ENCODE measurements at regions of chr7 and their contacts with region 1.

Region 1: GRCh38 chr7:106285051-106285854 is 470 bp upstream of the NAMPT start:
- DNase-seq: peak; percentile 97 to 98
- ATAC-seq: peak; percentile 82 to 86
- H3K4me3 ChIP-seq: peak overlapping the region; percentile 73 to 85 (median 78)
- H3K27ac ChIP-seq: peak overlapping the region; percentile 87 to 98 (median 97)
- H3K4me1 ChIP-seq: peaks cover 18 to 24% of the 10 kb centered on the region in 2 donors
- H3K27me3 ChIP-seq: no peaks in the 10 kb centered on the region
- CTCF ChIP-seq: peak in 1 of 5 experiments; percentile 7
- POLR2A ChIP-seq: peak; percentile 61 to 78

Region 2: GRCh38 chr7:105522062-105522936 is 763.0 kb before region 1 on chr7 and contains the start of gene PUS7:
- in situ Hi-C with region 1: no loop called
- intact Hi-C with region 1: loop called (anchors 10 kb)
- DNase-seq: peak; percentile 72 to 83
- ATAC-seq: peak; percentile 93 to 95
- H3K4me3 ChIP-seq: peak within 1 kb of the TSS; percentile 56 to 87 (median 64)
- H3K27ac ChIP-seq: peak within 1 kb of the TSS; percentile 82 to 96 (median 86)
- H3K4me1 ChIP-seq: peaks cover 12 to 15% of the 10 kb centered on the region in 2 donors
- H3K27me3 ChIP-seq: no peaks in the 10 kb centered on the region
- CTCF ChIP-seq: peak in 2 of 5 experiments; percentile 16 to 26
- POLR2A ChIP-seq: peak; percentile 90 to 91
- total RNA-seq, gene PUS7: 13.4 to 66.2 (median 17.8) TPM

Region 3: GRCh38 chr7:106056513-106057203 is 228.6 kb before region 1 on chr7:
- in situ Hi-C with region 1: loop called in 1 of 4 experiments (anchors 25 kb)
- intact Hi-C with region 1: loop called (anchors 10 kb)
- DNase-seq: peak; percentile 62 to 71
- ATAC-seq: peak; percentile 92 to 98
- H3K4me3 ChIP-seq: no peak overlapping the region
- H3K27ac ChIP-seq: no peak overlapping the region
- H3K4me1 ChIP-seq: peaks cover 0 to 4% of the 10 kb centered on the region in 2 donors
- H3K27me3 ChIP-seq: no peaks in the 10 kb centered on the region
- CTCF ChIP-seq: peak; percentile 88 to 92 (median 90)
- POLR2A ChIP-seq: no peak

Region 4: DNA sequence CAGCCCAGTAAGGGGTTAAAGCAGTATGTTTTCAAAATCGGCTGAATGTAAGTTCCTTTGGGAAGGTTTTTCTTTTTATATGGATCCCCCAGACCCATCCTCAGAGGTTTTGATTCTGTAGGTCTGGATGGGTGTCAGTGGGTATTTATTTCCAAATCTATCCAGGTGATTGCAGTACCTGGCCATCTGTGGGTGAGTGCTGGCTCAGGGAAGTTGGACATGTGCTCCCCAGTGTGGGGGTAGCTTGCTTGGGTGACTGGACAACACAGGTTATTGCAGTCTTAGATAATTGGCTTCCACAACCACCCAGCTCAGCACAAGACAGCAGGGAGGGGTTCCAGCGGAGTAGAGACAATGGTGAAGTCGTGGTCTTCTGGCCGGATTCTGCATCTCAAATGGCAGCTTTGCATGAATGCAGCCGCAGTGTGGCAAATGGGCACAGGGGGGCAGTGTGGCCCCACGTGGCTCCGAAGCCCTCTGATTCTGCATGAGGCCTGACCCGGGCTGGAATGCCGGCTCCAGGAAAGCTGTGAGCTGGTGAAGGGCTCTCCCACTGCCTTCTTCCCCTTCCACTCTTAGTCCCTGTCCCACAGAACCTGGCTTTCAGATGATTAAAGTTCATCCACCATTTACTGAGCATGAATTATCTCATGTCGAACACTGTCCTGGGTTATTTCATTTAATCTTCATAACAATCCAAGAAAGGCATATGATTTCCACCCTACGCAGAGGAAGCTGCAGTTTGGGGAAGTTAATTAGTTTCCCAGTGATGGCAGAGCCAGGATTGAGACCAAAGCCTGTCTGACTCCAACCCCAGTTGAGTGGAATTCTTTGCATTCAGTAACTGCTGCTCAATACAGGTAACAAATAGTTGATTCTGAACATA is 108.6 kb before region 1 on chr7:
- in situ Hi-C with region 1: loop called in 3 of 4 experiments (anchors 10 to 25 kb)
- intact Hi-C with region 1: loop called (anchors 1 kb)
- DNase-seq: peak; percentile 63 to 75
- ATAC-seq: peak; percentile 68 to 82
- H3K4me3 ChIP-seq: no peak overlapping the region
- H3K27ac ChIP-seq: peak overlapping the region; percentile 69 to 73 (median 71)
- H3K4me1 ChIP-seq: peaks cover 18% of the 10 kb centered on the region in 2 donors
- H3K27me3 ChIP-seq: no peaks in the 10 kb centered on the region
- CTCF ChIP-seq: peak; percentile 90 to 98 (median 97)
- POLR2A ChIP-seq: no peak

Region 5: DNA sequence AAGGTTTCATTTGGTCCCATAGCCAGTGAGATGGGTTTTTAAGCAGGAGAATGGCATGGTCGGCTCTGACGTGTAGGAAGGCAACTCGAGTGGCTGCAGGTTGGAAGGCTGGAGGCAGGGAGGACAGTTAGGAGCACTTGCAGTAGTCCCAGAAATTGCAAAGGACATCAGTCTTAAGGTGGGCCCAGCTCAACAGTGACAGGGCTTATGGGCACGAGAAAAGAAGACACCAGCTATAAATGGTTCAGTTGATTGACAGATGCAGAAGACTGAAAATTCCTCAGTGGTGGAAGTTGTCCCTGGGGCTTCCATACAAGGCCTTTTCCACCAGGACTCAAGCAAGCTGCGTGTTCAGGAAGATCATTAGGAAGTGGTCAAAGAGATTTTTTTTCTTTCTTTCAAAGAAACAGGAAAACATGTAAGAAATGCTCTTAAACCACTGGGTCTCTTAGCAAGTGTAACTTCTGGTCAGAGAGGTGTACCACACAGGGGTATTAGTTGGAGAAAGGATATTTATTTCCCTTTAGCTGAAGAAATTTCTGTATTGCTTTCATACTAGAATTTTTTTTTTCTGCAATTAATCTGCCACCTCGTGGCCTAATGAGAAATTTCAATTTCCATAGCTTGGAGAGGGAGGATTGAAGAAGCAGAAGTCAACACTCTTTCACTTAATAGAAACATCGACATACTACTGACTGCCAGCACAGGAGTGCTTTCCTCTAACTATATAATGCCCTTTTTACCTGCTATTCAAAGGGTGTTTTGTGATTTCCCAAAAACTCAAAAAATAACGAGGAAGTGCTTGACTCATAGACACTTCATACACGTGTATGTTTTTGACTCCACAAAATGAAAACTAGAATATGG is 177.0 kb after region 1 on chr7:
- in situ Hi-C with region 1: no loop called
- intact Hi-C with region 1: loop called (anchors 1 kb)
- DNase-seq: no peak
- ATAC-seq: peak; percentile 36 to 53
- H3K4me3 ChIP-seq: no peak overlapping the region
- H3K27ac ChIP-seq: no peak overlapping the region
- H3K4me1 ChIP-seq: peaks cover 0 to 6% of the 10 kb centered on the region in 2 donors
- H3K27me3 ChIP-seq: no peaks in the 10 kb centered on the region
- CTCF ChIP-seq: peak; percentile 40 to 73 (median 65)
- POLR2A ChIP-seq: no peak

Region 6: DNA sequence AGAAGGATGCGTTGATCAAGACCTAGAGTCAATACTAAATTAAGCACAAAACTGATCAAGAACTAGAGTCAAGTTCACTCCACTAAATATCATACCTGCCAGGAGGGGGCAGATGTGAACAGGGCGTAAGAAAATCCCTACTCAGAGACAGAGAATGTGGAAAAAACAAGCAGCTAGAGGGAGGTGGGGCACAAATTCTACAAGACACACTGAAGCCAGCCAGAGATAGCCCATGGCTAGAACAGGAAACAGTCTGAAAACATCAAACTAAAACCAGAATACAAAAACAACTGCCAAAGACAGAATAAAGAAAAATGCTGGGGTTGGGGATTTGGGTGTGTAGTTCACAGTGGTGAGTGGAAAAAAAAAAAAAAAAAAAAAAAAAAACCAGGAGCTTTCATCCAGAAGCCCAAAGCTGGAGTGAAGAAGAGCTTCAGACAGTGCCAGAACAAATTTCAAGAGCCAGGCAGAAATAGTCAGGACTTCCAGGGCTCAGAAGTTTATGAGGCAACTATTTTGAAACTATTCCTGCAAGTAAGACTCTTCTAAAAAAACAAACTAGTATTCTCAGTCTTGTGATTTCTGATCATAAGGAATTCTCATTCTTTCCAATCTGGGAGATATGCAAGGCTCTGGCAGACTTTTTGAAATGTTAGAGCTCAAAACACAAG is 257.4 kb after region 1 on chr7:
- in situ Hi-C with region 1: no loop called
- intact Hi-C with region 1: no loop called
- DNase-seq: peak in 1 of 2 donors; percentile 27
- ATAC-seq: peak; percentile 52 to 58
- H3K4me3 ChIP-seq: no peak overlapping the region
- H3K27ac ChIP-seq: peak overlapping the region in 3 of 4 donors; percentile 22 to 44 (median 33)
- H3K4me1 ChIP-seq: peaks cover 0 to 6% of the 10 kb centered on the region in 2 donors
- H3K27me3 ChIP-seq: no peaks in the 10 kb centered on the region
- CTCF ChIP-seq: peak in 3 of 5 experiments; percentile 34 to 53 (median 50)
- POLR2A ChIP-seq: no peak

Region 7: GRCh38 chr7:106644999-106645398 is 359.7 kb after region 1 on chr7:
- in situ Hi-C with region 1: no loop called
- intact Hi-C with region 1: no loop called
- DNase-seq: no peak
- ATAC-seq: no peak
- H3K4me3 ChIP-seq: no peak overlapping the region
- H3K27ac ChIP-seq: no peak overlapping the region
- H3K4me1 ChIP-seq: no peaks in the 10 kb centered on the region
- H3K27me3 ChIP-seq: no peaks in the 10 kb centered on the region
- CTCF ChIP-seq: no peak
- POLR2A ChIP-seq: no peak

Region 8: GRCh38 chr7:107743567-107744344 is 1458.5 kb after region 1 on chr7 and contains the start of gene CBLL1:
- in situ Hi-C with region 1: no loop called
- intact Hi-C with region 1: loop called (anchors 10 kb)
- DNase-seq: peak; percentile 95 to 96
- ATAC-seq: peak; percentile 92 to 95
- H3K4me3 ChIP-seq: peak within 1 kb of the TSS; percentile 75 to 96 (median 91)
- H3K27ac ChIP-seq: peak within 1 kb of the TSS; percentile 92 to 100 (median 95)
- H3K4me1 ChIP-seq: peaks cover 38 to 45% of the 10 kb centered on the region in 2 donors
- H3K27me3 ChIP-seq: no peaks in the 10 kb centered on the region
- CTCF ChIP-seq: peak; percentile 69 to 85 (median 83)
- POLR2A ChIP-seq: peak; percentile 65 to 83
- total RNA-seq, gene CBLL1: 21.6 to 49.6 (median 34.8) TPM